AG04450 (cell line): ENCODE measurements at regions of chr13 and their contacts with region 1.

Region 1: DNA sequence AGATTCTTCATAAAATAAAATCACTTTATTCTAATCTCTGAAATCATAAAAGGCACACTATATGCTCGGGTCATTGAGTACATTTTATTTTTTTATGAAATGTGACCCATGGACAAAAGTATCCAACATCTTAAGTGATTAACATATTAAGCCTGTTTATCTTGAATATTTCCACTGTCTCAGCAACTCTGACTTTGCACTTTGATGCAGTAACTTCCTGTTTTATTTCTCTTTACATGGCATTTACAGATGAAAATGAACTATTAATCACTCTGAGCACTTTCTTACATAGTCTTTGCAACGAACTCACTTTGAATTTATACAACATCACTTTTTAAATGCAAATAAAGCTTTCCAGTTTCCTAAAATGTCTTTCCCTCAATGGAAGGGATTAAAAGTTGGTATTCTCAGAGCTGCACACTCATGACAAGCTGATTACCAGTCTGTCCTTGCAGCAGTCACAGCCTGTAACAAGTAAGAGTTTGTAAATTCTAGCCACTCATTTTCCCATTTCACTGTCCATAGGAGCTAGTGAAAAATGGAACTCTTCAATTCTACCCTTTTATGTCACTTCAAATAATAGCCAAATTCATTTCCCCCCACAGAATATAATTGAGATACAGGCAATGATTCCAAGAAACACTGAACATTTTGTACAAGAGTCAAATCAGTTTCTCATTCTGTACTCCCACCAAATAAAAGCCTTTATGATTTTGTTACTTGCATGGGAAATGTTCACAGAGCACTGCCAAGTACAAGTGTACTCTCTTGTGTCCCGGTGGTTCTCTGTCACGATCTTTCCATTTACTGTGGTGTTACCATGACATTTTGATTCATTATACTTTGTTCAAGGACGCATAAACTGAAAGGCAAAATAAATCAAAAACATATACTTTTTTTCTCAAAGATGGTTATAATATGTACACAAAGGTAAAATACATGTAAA is 1968.9 kb downstream of the PCDH9 start:
- DNase-seq: no peak
- H3K4me3 ChIP-seq: no peak overlapping the region
- H3K27ac ChIP-seq: no peak overlapping the region
- H3K27me3 ChIP-seq: no peaks in the 10 kb centered on the region
- CTCF ChIP-seq: no peak

Region 2: DNA sequence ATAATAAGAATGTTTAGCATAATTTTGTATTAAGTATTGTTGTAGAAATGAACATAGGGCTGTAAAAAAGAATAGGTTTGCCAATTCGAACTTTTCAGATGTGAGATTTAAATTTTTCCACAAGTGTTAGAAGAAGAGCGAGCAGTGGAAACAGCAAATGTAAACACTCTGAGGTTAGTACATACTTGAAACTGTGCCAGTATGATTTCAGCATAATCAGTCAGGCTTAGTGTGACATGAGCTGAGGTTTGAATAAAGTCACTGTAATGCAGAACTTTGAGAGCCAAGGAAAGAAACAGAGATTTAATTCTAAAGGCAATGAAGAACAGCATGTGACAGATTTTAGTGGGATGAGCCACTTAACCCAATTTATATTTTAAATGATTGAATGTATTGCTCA is 197.5 kb before region 1 on chr13:
- CTCF ChIA-PET with region 1: no interaction called
- POLR2A ChIA-PET with region 1: no interaction called
- DNase-seq: peak; percentile 71
- H3K4me3 ChIP-seq: no peak overlapping the region
- H3K27ac ChIP-seq: no peak overlapping the region
- H3K27me3 ChIP-seq: no peaks in the 10 kb centered on the region
- CTCF ChIP-seq: no peak

Region 3: GRCh38 chr13:65330691-65331090 is 69.5 kb after region 1 on chr13:
- CTCF ChIA-PET with region 1: interaction called, 10 read pairs
- POLR2A ChIA-PET with region 1: no interaction called
- DNase-seq: no peak
- H3K4me3 ChIP-seq: no peak overlapping the region
- H3K27ac ChIP-seq: no peak overlapping the region
- H3K27me3 ChIP-seq: no peaks in the 10 kb centered on the region
- CTCF ChIP-seq: no peak